H1 (cell line): ENCODE measurements at regions of chr22 and their contacts with region 1.

Region 1: DNA sequence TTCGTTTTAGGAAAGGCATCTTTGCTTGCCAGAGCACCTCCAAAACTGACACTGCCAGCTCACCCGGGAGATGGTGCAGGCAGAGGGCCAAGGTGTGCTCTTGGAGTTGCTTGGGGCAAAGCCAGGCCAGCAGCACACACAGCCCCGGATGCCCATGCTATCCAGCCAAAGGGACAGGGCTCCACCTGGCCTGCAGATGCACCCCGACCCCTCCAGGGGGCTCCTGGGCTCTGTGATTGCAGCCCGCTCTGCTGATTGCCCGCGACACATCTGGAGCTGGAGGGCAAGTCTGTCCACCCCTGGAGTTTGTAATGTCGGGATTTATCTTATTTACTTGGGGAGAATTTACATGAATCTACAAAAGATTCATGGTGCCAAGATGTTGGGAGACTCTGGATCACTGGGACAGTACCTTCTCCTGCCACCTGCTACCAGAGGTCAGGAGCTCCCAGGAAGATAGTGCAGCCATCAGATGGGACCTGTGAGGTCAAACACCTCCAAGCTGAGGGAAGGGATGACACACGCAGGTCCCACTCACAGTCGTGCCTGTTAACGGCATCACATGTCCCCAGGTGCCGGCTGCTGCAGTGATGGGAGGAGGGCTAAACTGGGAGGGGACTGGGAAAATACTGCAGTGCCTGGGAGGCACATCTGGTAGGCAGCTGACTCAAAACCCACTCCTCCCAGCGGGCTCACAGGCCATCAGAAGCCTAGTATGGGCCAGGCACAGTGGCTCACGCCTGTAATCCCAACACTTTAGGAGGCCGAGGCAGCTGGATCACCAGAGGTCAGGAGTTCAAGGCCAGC is 17.2 kb downstream of the CBX7 start:
- DNase-seq: peak; percentile 50 to 90
- H3K4me3 ChIP-seq: no peak overlapping the region
- H3K27ac ChIP-seq: no peak overlapping the region
- H3K4me1 ChIP-seq: peaks cover 4 to 17% (median 11%) of the 10 kb centered on the region in 4 experiments; a peak in 4 of 7 replicates
- H3K27me3 ChIP-seq: no peaks in the 10 kb centered on the region
- CTCF ChIP-seq: peak; percentile 85 to 92 (median 92)
- EP300 ChIP-seq: no peak
- POLR2A ChIP-seq: no peak
- RAD21 ChIP-seq: peak; percentile 88 to 94

Region 2: DNA sequence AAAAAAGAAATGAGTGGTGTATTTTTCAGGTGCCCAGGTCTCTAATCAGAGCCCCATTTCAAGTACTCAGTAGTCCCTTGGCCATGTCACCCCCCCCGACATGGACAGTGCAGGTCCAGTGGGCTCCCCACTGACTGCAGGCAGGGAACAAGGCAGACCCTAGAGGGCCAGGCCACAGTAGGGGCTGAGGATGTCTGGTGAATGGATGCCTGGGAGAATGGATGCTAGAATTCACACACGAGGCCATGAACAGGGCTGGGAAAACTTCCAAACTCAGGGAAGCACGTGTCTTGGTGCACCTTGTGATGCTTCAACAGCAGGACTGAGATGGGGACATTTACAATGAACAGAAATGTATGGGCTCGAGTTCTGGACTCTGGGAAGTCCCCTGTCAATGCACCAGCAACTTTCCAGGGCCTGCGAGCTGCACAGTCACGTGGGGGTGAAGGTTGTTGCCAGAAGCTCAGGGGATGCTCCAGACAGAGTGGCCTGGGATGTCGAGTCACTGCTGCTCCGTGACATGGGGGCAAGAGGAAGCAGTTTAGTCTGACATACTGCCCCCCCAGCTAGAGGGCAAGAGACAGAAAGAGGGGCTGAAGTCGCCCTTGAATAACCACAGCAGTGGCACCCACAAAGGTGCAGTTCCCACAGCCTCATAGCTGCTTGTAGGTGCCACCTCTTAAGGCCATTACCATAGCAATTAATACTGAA is 55.1 kb before region 1 on chr22:
- CTCF ChIA-PET with region 1: no interaction called
- POLR2A ChIA-PET with region 1: no interaction called
- DNase-seq: no peak
- H3K4me3 ChIP-seq: no peak overlapping the region
- H3K27ac ChIP-seq: no peak overlapping the region
- H3K4me1 ChIP-seq: peaks cover 0 to 7% (median 1%) of the 10 kb centered on the region in 4 experiments; a peak in 4 of 7 replicates
- H3K27me3 ChIP-seq: no peaks in the 10 kb centered on the region
- CTCF ChIP-seq: no peak
- EP300 ChIP-seq: no peak
- POLR2A ChIP-seq: no peak
- RAD21 ChIP-seq: no peak

Region 3: GRCh38 chr22:39123751-39124601 is 11.3 kb before region 1 on chr22:
- CTCF ChIA-PET with region 1: interaction called, 47 read pairs
- POLR2A ChIA-PET with region 1: interaction called, 6 read pairs
- DNase-seq: no peak
- H3K4me3 ChIP-seq: peak overlapping the region in 1 of 4 experiments; percentile 49; a peak in 3 of 8 replicates
- H3K27ac ChIP-seq: no peak overlapping the region
- H3K4me1 ChIP-seq: peaks cover 0 to 2% (median 2%) of the 10 kb centered on the region in 4 experiments; a peak in 4 of 7 replicates
- H3K27me3 ChIP-seq: no peaks in the 10 kb centered on the region
- CTCF ChIP-seq: no peak
- EP300 ChIP-seq: no peak
- POLR2A ChIP-seq: no peak
- RAD21 ChIP-seq: no peak

Region 4: DNA sequence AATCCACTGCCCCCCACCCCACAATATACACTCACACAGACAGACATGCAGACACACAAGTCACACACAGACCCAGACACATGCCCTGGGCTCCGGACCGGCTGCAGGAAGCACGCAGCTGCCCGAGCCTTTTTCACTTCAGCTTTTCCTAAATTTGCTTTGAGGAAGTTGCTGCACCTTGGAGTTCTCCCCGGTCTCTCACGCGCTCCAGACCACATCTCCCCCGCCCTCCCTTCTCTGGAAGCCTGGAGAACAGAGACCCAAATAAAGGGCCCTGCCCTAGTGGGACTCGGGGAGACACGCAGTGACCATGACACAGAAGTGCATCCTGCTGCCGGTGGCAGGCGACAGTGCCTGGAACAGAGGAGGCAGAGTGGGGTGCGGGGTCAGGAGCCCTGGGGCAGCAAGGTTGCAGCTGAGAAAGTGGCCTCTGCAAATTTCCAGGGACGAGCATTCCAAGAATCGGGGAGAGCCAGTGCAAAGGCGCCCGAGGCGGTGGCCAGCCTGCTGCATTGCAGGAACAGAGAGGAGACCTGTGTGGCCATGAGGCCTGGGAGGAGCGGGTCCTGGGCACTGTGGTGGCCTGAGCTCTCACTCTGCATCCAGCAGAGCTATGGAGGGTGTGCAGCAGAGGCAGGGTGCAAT is 165.0 kb after region 1 on chr22:
- CTCF ChIA-PET with region 1: interaction called, 28 read pairs
- POLR2A ChIA-PET with region 1: no interaction called
- DNase-seq: no peak
- H3K4me3 ChIP-seq: no peak overlapping the region
- H3K27ac ChIP-seq: no peak overlapping the region
- H3K4me1 ChIP-seq: peaks cover 2 to 24% (median 7%) of the 10 kb centered on the region in 4 experiments
- H3K27me3 ChIP-seq: no peaks in the 10 kb centered on the region; a peak in 1 of 7 replicates
- CTCF ChIP-seq: no peak
- EP300 ChIP-seq: no peak
- POLR2A ChIP-seq: no peak
- RAD21 ChIP-seq: peak in 1 of 2 experiments; percentile 11; a peak in 2 of 4 replicates

Region 5: GRCh38 chr22:39364714-39365491 is 229.6 kb after region 1 on chr22:
- CTCF ChIA-PET with region 1: no interaction called
- POLR2A ChIA-PET with region 1: no interaction called
- DNase-seq: no peak
- H3K4me3 ChIP-seq: no peak overlapping the region
- H3K27ac ChIP-seq: no peak overlapping the region
- H3K4me1 ChIP-seq: peaks cover 4 to 40% (median 25%) of the 10 kb centered on the region in 4 experiments
- H3K27me3 ChIP-seq: 0 out of 7 replicates have a peak, but pooled peaks cover 0 to 2% (median 0%) of the 10 kb centered on the region in 4 experiments
- CTCF ChIP-seq: no peak
- EP300 ChIP-seq: no peak
- POLR2A ChIP-seq: no peak
- RAD21 ChIP-seq: no peak

Region 6: DNA sequence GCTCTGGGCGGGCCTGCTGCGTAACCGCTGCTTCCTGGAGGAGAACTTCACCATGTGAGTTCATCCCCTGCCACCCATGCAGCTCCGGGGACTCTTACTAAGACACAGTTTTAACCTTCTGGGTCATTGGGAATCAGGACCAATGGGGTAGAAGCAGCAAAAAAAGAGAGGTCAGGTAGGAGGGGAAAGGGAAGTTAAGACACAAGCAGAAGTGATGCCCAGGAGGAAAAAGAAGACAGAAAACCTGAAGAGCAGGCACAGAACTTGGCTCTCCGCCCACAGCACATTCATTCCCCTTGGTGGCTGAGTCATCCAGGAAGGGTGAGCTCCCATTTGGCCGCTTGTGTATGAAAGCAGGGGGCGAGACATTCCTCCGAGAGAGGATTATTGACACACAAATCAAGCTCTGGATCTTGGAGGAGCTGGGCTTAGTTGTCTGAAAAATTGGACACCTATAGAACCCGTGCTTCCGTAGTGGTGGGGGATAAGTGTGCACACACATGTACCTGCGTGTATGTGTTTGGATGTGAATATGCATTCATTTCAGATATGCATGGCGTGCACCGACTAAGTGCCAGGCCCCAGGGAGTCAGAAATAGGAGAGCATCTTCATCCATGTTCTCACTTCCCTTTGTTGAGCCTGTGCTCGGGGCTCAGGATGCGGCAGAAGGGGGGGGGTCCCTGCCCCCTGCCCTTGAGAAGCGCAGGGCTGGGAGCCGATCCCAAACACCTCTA is 499.5 kb after region 1 on chr22:
- CTCF ChIA-PET with region 1: no interaction called
- POLR2A ChIA-PET with region 1: no interaction called
- DNase-seq: no peak
- H3K4me3 ChIP-seq: no peak overlapping the region
- H3K27ac ChIP-seq: no peak overlapping the region
- H3K4me1 ChIP-seq: peaks cover 0 to 12% (median 3%) of the 10 kb centered on the region in 4 experiments; a peak in 5 of 7 replicates
- H3K27me3 ChIP-seq: no peaks in the 10 kb centered on the region
- CTCF ChIP-seq: no peak
- EP300 ChIP-seq: no peak
- POLR2A ChIP-seq: no peak
- RAD21 ChIP-seq: no peak